ENCODE measurements at regions of chr17 and their contacts with region 1.

Region 1: DNA sequence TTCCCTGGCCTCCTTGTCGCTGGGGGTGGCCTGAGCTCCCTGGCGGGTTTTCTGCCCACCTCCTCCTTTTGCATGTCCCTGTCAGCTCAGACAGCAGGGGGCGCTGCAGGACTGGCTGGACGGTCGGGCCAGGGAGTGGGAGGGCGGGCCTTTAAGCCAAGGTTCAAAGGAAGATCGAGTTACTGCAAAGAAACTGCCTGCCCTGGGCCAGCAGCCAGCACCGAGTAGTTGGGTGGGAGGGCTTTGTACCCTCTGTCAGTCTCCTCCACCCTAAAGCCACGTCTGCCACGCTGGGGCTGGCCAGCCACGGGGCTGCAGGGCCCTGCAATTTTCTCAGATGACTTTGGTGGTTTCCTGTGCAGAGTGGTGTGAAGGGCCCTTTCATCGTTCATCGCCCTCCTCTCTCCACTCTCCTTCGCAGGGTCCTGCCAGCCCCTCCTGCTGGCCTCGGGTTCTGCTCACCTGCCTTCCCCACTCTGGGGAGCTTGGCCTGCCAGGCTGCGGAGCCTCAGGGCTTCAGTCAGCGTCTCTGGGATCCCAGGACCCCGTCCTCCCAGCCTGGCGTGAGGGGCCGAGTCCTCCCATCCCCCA is 12.3 kb downstream of the GPR142 start:
- DNase-seq: peak; percentile 96
- ATAC-seq: peak; percentile 93
- H3K4me3 ChIP-seq: peak overlapping the region; percentile 14
- H3K27ac ChIP-seq: no peak overlapping the region
- H3K4me1 ChIP-seq: peaks cover 10% of the 10 kb centered on the region
- H3K27me3 ChIP-seq: no peaks in the 10 kb centered on the region
- CTCF ChIP-seq: peak; percentile 95

Region 2: GRCh38 chr17:74259667-74260524 is 119.7 kb before region 1 on chr17:
- intact Hi-C with region 1: no loop called
- DNase-seq: no peak
- ATAC-seq: no peak
- H3K4me3 ChIP-seq: no peak overlapping the region
- H3K27ac ChIP-seq: no peak overlapping the region
- H3K4me1 ChIP-seq: no peaks in the 10 kb centered on the region
- H3K27me3 ChIP-seq: no peaks in the 10 kb centered on the region
- CTCF ChIP-seq: no peak

Region 3: GRCh38 chr17:74325743-74326379 is 53.7 kb before region 1 on chr17 and contains the start of gene KIF19:
- intact Hi-C with region 1: no loop called
- DNase-seq: peak; percentile 75
- ATAC-seq: peak; percentile 79
- H3K4me3 ChIP-seq: peak within 1 kb of the TSS; percentile 41
- H3K27ac ChIP-seq: no peak within 1 kb of the TSS
- H3K4me1 ChIP-seq: peaks cover 13% of the 10 kb centered on the region
- H3K27me3 ChIP-seq: peaks cover 14% of the 10 kb centered on the region
- CTCF ChIP-seq: no peak
- total RNA-seq, gene KIF19: 0.23 TPM

Region 4: DNA sequence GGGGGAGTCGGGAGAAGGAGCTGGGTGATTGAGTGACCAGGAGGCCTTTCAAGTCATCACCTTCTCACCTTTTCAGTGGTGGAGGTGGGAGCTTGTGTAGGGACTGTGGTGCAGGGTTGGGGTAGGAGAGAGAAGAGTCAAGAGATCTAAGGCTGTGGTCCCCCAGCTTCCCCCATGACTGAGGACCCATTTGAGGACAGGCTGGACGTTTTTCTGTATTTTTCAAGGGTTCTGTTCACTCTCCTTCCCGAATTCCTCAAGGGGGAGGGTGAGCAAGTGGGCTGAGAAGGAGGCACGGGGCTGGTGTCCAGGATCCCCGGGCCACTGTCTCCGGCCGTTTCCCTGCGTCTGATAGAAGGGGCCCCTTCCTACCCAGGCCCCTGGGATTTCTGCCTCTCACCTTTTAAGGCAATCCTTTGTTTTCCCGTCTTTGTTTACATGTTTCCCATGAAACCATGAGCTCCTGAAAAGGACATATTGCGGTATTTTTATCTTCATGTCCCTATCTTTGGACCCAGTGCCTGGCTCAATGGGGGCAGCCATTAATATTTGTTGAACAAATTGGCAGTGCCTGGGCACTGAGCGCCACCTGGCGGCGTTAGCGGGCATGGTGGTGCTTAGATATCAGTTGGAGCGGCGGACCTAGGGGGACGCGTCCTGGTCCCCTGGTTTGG is 77.7 kb after region 1 on chr17:
- intact Hi-C with region 1: loop called (anchors 5 kb)
- DNase-seq: peak; percentile 89
- ATAC-seq: peak; percentile 60
- H3K4me3 ChIP-seq: no peak overlapping the region
- H3K27ac ChIP-seq: no peak overlapping the region
- H3K4me1 ChIP-seq: peaks cover 32% of the 10 kb centered on the region
- H3K27me3 ChIP-seq: no peaks in the 10 kb centered on the region
- CTCF ChIP-seq: peak; percentile 94

Measured in upper lobe of right lung (tissue), 1 donor.